ENCODE measurements at regions of chr2 and their contacts with region 1.

Region 1: DNA sequence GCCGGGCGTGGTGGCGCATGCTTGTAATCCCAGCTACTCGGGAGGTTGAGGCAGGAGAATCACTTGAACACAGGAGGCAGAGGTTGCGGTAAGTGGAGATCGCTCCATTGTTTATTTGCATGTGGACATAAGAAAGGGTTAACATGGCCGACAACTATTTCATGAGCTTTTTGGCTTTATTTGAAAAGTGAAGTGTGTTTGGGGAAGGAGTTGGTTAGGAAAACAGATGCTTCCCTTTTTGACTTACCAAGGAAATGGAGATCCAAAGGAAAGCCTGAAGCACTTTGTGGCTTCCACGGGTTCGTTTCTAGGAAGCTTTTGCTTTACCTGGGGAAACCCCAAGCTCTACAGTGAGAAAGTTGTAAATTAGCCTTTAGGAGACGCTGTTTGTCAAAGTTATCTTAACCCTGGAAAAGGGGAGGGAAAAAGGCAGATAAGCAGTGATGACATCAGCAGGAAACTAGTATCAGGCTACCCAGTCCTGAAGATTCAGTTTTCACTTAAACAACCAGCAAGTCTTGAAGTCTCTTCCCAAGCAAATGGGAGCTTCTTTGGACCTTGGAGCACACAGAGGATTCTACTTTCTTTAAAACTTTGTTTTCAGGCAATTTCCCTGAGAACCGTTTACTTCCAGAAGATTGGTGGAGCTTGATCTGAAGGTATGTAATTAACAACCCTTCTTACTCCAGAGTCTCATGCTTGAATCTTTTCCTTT is at the start of gene CASP10:
- DNase-seq: no peak
- H3K4me3 Mint-ChIP-seq: peak within 1 kb of the TSS; percentile 98
- H3K27ac Mint-ChIP-seq: peak within 1 kb of the TSS; percentile 84
- H3K4me1 Mint-ChIP-seq: peaks cover 57% of the 10 kb centered on the region
- H3K27me3 Mint-ChIP-seq: no peaks in the 10 kb centered on the region
- total RNA-seq, gene CASP10: 47.8 to 51.3 TPM

Region 2: GRCh38 chr2:200963124-200963917 is 219.5 kb before region 1 on chr2 and contains the start of gene ORC2:
- CTCF ChIA-PET with region 1: interaction called, 10 read pairs
- POLR2A ChIA-PET with region 1: interaction called, 5 read pairs
- DNase-seq: peak; percentile 93
- H3K4me3 Mint-ChIP-seq: peak within 1 kb of the TSS; percentile 92
- H3K27ac Mint-ChIP-seq: peak within 1 kb of the TSS; percentile 86
- H3K4me1 Mint-ChIP-seq: peaks cover 72% of the 10 kb centered on the region
- H3K27me3 Mint-ChIP-seq: no peaks in the 10 kb centered on the region
- total RNA-seq, gene ORC2: 50.8 to 51.6 TPM

Region 3: GRCh38 chr2:201130524-201131186 is 52.2 kb before region 1 on chr2:
- CTCF ChIA-PET with region 1: interaction called, 6 read pairs
- POLR2A ChIA-PET with region 1: interaction called, 11 read pairs
- DNase-seq: peak; percentile 50
- H3K4me3 Mint-ChIP-seq: peak overlapping the region; percentile 83
- H3K27ac Mint-ChIP-seq: peak overlapping the region; percentile 90
- H3K4me1 Mint-ChIP-seq: peaks cover 79% of the 10 kb centered on the region
- H3K27me3 Mint-ChIP-seq: no peaks in the 10 kb centered on the region

Region 4: DNA sequence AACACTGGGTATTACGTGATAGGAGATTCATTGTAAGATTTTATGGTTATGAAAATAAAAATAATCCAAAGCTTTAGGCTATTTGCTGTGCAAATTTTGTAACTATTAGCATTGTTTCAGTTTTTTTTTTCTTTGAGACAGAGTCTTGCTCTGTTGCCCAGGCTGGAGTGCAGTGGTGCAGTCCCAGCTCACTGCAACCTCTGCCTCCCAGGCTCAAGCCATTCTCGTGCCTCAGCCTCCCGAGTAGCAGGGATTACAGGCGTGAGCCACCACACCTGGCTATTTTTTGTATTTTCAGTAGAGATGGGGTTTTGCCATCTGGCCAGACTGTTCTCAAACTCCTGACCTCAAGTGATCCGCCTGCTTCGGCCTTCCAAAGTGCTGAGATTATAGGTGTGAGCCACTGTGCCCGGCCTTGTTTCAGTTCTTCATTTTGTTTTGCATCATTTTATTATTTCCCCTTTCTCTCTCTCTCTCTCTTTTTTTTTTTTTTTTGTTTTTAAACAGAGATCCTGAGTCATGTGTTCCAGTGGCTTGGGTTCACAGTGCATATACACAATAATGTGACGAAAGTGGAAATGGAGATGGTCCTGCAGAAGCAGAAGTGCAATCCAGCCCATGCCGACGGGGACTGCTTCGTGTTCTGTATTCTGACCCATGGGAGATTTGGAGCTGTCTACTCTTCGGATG is 25.9 kb after region 1 on chr2:
- CTCF ChIA-PET with region 1: interaction called, 5 read pairs
- POLR2A ChIA-PET with region 1: interaction called, 10 read pairs
- DNase-seq: no peak
- H3K4me3 Mint-ChIP-seq: no peak overlapping the region
- H3K27ac Mint-ChIP-seq: no peak overlapping the region
- H3K4me1 Mint-ChIP-seq: peaks cover 35% of the 10 kb centered on the region
- H3K27me3 Mint-ChIP-seq: no peaks in the 10 kb centered on the region

Region 5: GRCh38 chr2:201275990-201276389 is 93.2 kb after region 1 on chr2:
- CTCF ChIA-PET with region 1: no interaction called
- POLR2A ChIA-PET with region 1: no interaction called
- DNase-seq: no peak
- H3K4me3 Mint-ChIP-seq: no peak overlapping the region
- H3K27ac Mint-ChIP-seq: no peak overlapping the region
- H3K4me1 Mint-ChIP-seq: peaks cover 50% of the 10 kb centered on the region
- H3K27me3 Mint-ChIP-seq: no peaks in the 10 kb centered on the region

Region 6: GRCh38 chr2:201363857-201364560 is 181.2 kb after region 1 on chr2:
- CTCF ChIA-PET with region 1: interaction called, 12 read pairs
- POLR2A ChIA-PET with region 1: interaction called, 4 read pairs
- DNase-seq: peak; percentile 21
- H3K4me3 Mint-ChIP-seq: no peak overlapping the region
- H3K27ac Mint-ChIP-seq: peak overlapping the region; percentile 71
- H3K4me1 Mint-ChIP-seq: peaks cover 32% of the 10 kb centered on the region
- H3K27me3 Mint-ChIP-seq: no peaks in the 10 kb centered on the region

Measured in activated CD4-positive, alpha-beta memory T cell treated with anti-CD3 and anti-CD28 coated beads, Interleukin-2, amount 10 ng/mL, durations not matched to agents 7 days and 5 days (primary cell).